ENCODE measurements at regions of chr10 and their contacts with region 1.

Region 1: GRCh38 chr10:75235375-75236177 is at the start of gene COMTD1:
- DNase-seq: peak; percentile 95
- H3K4me3 Mint-ChIP-seq: peak within 1 kb of the TSS; percentile 80
- H3K27ac Mint-ChIP-seq: peak within 1 kb of the TSS; percentile 91
- H3K4me1 Mint-ChIP-seq: peaks cover 27% of the 10 kb centered on the region
- H3K27me3 Mint-ChIP-seq: peaks cover 6% of the 10 kb centered on the region

Region 2: GRCh38 chr10:74244097-74244685 is 991.4 kb before region 1 on chr10:
- CTCF ChIA-PET with region 1: interaction called, 24 read pairs
- DNase-seq: peak; percentile 49
- H3K4me3 Mint-ChIP-seq: no peak overlapping the region
- H3K27ac Mint-ChIP-seq: no peak overlapping the region
- H3K4me1 Mint-ChIP-seq: no peaks in the 10 kb centered on the region
- H3K27me3 Mint-ChIP-seq: no peaks in the 10 kb centered on the region

Region 3: DNA sequence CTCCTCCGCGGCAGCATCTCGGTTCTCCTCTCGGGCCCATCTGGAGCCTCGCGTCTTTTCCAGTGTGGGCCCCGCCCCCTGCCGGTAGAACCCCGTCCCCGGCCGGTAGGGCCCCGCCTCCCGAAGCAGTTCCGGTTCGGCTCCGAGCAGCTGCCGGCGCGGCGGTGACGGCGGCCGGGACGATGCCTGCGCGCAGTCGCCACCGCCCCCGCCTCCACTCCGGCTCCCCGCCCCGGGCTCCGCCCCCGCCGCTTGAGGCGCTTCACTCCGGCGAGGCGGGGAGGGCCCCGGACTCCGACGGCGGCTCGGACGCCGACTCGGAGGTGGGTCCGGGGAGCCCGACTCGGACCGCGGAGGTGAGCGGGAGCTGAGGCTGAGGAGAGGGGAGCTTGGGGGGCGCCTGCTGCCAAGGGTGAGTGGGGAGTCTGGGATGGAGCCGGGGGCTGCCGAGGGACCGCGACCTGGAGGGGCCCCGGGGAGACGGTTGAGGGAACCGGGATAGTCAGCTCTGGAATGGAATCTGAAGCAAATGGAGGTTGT is 124.1 kb before region 1 on chr10 and contains the start of gene SAMD8:
- CTCF ChIA-PET with region 1: interaction called, 29 read pairs
- DNase-seq: peak; percentile 98
- H3K4me3 Mint-ChIP-seq: peak within 1 kb of the TSS; percentile 76
- H3K27ac Mint-ChIP-seq: peak within 1 kb of the TSS; percentile 89
- H3K4me1 Mint-ChIP-seq: peaks cover 55% of the 10 kb centered on the region
- H3K27me3 Mint-ChIP-seq: peaks cover under 1% of the 10 kb centered on the region

Region 4: GRCh38 chr10:75137533-75138438 is 97.8 kb before region 1 on chr10:
- CTCF ChIA-PET with region 1: no interaction called
- DNase-seq: no peak
- H3K4me3 Mint-ChIP-seq: no peak overlapping the region
- H3K27ac Mint-ChIP-seq: no peak overlapping the region
- H3K4me1 Mint-ChIP-seq: peaks cover 7% of the 10 kb centered on the region
- H3K27me3 Mint-ChIP-seq: no peaks in the 10 kb centered on the region

Region 5: GRCh38 chr10:75165684-75166622 is 69.6 kb before region 1 on chr10:
- CTCF ChIA-PET with region 1: interaction called, 10 read pairs
- DNase-seq: peak; percentile 28
- H3K4me3 Mint-ChIP-seq: peak overlapping the region; percentile 34
- H3K27ac Mint-ChIP-seq: peak overlapping the region; percentile 91
- H3K4me1 Mint-ChIP-seq: peaks cover 40% of the 10 kb centered on the region
- H3K27me3 Mint-ChIP-seq: no peaks in the 10 kb centered on the region

Region 6: GRCh38 chr10:75187961-75188426 is 47.6 kb before region 1 on chr10:
- CTCF ChIA-PET with region 1: interaction called, 217 read pairs
- DNase-seq: peak; percentile 82
- H3K4me3 Mint-ChIP-seq: no peak overlapping the region
- H3K27ac Mint-ChIP-seq: peak overlapping the region; percentile 83
- H3K4me1 Mint-ChIP-seq: peaks cover 19% of the 10 kb centered on the region
- H3K27me3 Mint-ChIP-seq: no peaks in the 10 kb centered on the region

Region 7: GRCh38 chr10:75203724-75204123 is 31.9 kb before region 1 on chr10:
- CTCF ChIA-PET with region 1: interaction called, 11 read pairs
- DNase-seq: no peak
- H3K4me3 Mint-ChIP-seq: no peak overlapping the region
- H3K27ac Mint-ChIP-seq: no peak overlapping the region
- H3K4me1 Mint-ChIP-seq: peaks cover 13% of the 10 kb centered on the region
- H3K27me3 Mint-ChIP-seq: peaks cover 4% of the 10 kb centered on the region

Region 8: DNA sequence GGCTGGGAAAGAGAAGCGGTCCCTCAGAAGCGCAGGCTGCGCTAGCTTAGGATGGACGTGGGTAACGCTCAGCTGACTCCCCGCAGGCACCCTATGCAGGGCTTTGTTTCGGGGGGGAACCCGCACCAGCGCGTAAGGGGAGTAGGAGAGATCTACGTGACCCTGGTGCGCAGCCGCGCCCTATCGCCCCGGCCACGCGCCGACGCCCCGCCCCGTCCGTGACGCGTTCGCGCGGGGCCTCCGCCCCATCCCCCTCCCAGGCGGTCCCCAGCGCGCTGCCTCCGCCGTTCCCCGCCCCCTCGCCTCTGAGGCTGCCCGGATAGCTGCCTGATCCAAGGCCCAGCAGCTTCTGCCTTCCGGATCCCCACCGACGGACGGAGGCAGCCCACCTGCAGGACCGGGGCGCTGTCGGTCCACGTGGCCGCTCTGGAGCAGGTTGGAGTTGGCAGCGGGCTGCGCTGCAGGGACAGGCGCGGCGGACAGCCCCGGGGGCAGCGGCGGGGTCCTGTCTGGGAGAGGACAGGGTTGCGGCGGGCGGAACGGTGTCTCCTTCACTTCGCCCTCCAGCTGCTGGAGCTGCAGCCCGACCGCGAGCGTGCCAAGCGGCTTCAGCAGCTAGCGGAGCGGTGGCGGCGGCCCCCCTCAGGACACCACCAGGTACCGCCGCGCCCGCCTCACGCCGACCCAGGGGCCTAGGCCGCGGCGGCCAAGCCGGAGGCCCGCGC is 25.1 kb before region 1 on chr10 and contains the start of gene VDAC2:
- CTCF ChIA-PET with region 1: interaction called, 34 read pairs
- DNase-seq: peak; percentile 94
- H3K4me3 Mint-ChIP-seq: peak within 1 kb of the TSS; percentile 91
- H3K27ac Mint-ChIP-seq: peak within 1 kb of the TSS; percentile 100
- H3K4me1 Mint-ChIP-seq: peaks cover 38% of the 10 kb centered on the region
- H3K27me3 Mint-ChIP-seq: peaks cover 4% of the 10 kb centered on the region

Measured in activated naive CD4-positive, alpha-beta T cell treated with anti-CD3 and anti-CD28 coated beads, Interleukin-2, amount 10 ng/mL, durations not matched to agents 7 days and 5 days (primary cell).